ENCODE measurements at regions of chr11 and their contacts with region 1.

Region 1: DNA sequence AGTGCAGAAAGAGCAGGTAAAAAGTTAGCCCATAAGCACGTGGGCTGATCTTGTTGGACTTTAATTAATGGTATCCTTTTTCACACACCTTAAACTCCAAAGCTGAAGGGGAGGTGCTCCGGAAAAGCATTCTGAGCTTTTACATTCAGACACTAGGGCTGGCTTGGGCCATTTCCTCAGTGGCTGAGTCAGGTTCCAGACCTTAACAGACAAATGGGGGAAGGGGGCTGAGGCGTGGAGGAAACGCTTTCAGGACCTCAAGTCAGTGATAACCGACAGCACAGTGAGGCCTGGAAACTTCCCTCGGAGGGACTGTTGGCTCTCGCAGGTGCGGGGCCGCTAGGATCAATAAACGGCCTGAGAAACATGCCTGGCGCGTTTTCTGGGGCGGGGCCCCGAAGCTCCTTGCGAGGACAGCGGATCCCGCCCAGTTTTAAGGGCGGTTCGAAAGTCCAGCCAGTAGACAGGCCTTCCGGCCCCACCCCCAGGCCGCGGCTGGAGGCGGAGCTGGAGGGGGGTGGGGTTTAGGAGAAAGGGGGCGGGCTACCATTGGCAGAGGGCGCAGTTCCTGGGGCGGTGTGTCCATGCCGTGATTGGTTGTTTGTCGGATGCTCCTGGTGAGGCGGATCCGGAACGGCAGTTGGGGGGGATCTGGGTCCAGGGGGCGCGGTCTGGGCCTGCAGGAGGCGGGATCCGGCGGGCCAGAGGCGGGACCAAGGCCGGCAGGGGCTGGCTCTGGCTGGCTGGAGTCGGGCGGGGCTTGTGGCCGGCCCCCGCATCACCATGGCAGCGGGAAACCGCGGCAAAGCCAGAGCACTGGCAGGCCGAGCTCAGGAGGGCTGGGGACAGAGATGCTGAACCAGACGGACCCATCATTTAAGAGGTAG is 8.0 kb downstream of the C11orf52 start:
- DNase-seq: peak; percentile 97 to 99 (median 98)
- ATAC-seq: peak; percentile 96
- H3K4me3 ChIP-seq: peak overlapping the region; percentile 40
- H3K27ac ChIP-seq: peak overlapping the region; percentile 89
- H3K4me1 ChIP-seq: peaks cover 31 to 33% of the 10 kb centered on the region in 2 experiments
- H3K27me3 ChIP-seq: no peaks in the 10 kb centered on the region
- CTCF ChIP-seq: no peak
- EP300 ChIP-seq: no peak; the same call in 1 of the 2 replicates
- POLR2A ChIP-seq: peak; percentile 89
- RAD21 ChIP-seq: peak in 1 of 2 experiments; percentile 16; a peak in 1 of 4 replicates

Region 2: DNA sequence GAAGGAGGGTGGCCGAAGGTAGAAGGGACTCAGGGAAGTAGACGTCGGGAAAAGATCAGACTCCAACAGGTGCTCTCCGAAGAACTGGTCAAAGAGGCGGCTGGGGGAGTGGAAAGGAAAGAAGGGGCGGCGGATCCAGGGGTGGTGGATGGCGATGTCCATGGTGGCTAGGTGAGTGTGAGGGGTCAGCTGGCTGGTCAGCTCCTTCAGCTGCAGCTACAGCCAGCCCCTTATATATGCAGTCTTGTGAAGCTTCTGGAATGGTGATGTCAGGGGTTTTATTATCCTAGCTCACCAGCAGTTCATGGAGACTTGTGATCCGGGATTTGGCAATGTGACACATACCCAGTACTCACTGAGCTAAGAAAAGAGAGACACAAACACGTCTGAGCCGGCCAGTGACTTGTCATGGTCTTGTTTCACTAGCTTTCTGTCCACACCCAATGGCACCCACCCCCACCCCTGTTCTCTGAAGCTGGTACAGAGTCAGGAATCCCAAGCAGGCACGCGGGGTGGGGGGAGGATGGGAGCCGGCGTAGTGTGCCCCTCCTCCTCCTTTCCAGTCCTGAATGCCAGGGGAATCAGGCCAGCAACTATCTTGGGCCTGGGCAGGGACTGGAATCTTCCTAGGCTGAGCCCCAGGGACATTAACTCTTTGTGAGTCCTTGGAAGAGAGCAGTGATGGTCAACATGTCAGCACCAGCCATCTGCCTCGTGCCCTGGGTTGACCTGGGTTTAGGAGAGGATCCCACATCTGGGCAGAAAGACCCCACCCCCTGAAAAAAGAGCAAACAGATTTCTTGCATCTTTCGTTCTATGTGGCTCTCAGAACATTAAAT is 15.0 kb before region 1 on chr11 and contains the start of gene CRYAB:
- CTCF ChIA-PET with region 1: no interaction called
- POLR2A ChIA-PET with region 1: interaction called, 13 read pairs
- in situ Hi-C with region 1: no loop called
- intact Hi-C with region 1: no loop called
- DNase-seq: peak; percentile 33 to 66 (median 36)
- ATAC-seq: peak; percentile 48
- H3K4me3 ChIP-seq: no peak within 1 kb of the TSS
- H3K27ac ChIP-seq: peak within 1 kb of the TSS; percentile 57
- H3K4me1 ChIP-seq: peaks cover 35 to 40% of the 10 kb centered on the region in 2 experiments; a peak in 4 of 5 replicates
- H3K27me3 ChIP-seq: no peaks in the 10 kb centered on the region
- CTCF ChIP-seq: no peak
- EP300 ChIP-seq: no peak
- POLR2A ChIP-seq: no peak
- RAD21 ChIP-seq: no peak
- polyA plus RNA-seq, gene CRYAB: 6.5 to 7.5 TPM

Region 3: GRCh38 chr11:111938687-111939160 is 12.0 kb after region 1 on chr11:
- CTCF ChIA-PET with region 1: no interaction called
- POLR2A ChIA-PET with region 1: interaction called, 20 read pairs
- in situ Hi-C with region 1: no loop called
- intact Hi-C with region 1: no loop called
- DNase-seq: peak in 2 of 4 experiments; percentile 32 to 56
- ATAC-seq: peak; percentile 52
- H3K4me3 ChIP-seq: no peak overlapping the region
- H3K27ac ChIP-seq: peak overlapping the region; percentile 62; the same call in 2 of the 3 replicates
- H3K4me1 ChIP-seq: peaks cover 22 to 31% of the 10 kb centered on the region in 2 experiments
- H3K27me3 ChIP-seq: no peaks in the 10 kb centered on the region
- CTCF ChIP-seq: no peak
- EP300 ChIP-seq: no peak
- POLR2A ChIP-seq: no peak
- RAD21 ChIP-seq: no peak

Region 4: DNA sequence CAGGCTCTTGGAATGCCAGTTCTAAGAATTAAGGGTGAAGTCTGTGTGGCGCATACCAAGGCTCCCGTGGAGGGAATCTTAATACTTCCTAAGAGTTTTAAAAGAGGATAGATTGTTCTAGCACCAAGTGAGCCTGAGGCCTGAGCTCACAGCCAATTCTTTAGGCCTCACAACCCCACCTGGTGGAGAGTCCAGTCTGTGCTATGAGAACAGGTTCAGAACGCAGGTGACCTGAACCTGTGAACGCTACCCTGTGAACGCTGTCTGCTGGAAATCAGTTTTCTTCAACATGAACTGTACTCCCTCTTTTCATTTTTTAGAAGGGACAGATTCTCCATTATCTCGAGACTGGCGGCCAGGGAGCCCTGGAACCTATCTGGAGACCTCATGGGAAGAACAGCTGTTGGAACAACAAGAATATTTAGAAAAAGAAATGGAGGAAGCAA is 55.3 kb after region 1 on chr11:
- CTCF ChIA-PET with region 1: interaction called, 10 read pairs
- POLR2A ChIA-PET with region 1: interaction called, 3 read pairs
- in situ Hi-C with region 1: no loop called
- intact Hi-C with region 1: loop called (anchors 1 kb)
- DNase-seq: peak; percentile 57 to 84 (median 65)
- ATAC-seq: peak; percentile 95
- H3K4me3 ChIP-seq: no peak overlapping the region
- H3K27ac ChIP-seq: peak overlapping the region; percentile 62; the same call in 1 of the 3 replicates
- H3K4me1 ChIP-seq: peaks cover 8 to 28% of the 10 kb centered on the region in 2 experiments
- H3K27me3 ChIP-seq: no peaks in the 10 kb centered on the region
- CTCF ChIP-seq: peak; percentile 83 to 91 (median 85)
- EP300 ChIP-seq: no peak
- POLR2A ChIP-seq: no peak
- RAD21 ChIP-seq: peak; percentile 78 to 86

Region 5: GRCh38 chr11:112024773-112025678 is 98.3 kb after region 1 on chr11 and contains the start of gene DLAT:
- CTCF ChIA-PET with region 1: interaction called, 4 read pairs
- POLR2A ChIA-PET with region 1: no interaction called
- in situ Hi-C with region 1: no loop called
- intact Hi-C with region 1: loop called (anchors 1 kb)
- DNase-seq: peak; percentile 86 to 95 (median 87)
- ATAC-seq: peak; percentile 90
- H3K4me3 ChIP-seq: peak within 1 kb of the TSS; percentile 89
- H3K27ac ChIP-seq: peak within 1 kb of the TSS; percentile 87
- H3K4me1 ChIP-seq: peaks cover 6 to 13% of the 10 kb centered on the region in 2 experiments; a peak in 3 of 5 replicates
- H3K27me3 ChIP-seq: no peaks in the 10 kb centered on the region
- CTCF ChIP-seq: no peak
- EP300 ChIP-seq: no peak; the same call in 1 of the 2 replicates
- POLR2A ChIP-seq: peak; percentile 97
- RAD21 ChIP-seq: 0 out of 4 replicates have a peak, but pooled peaks of 1 of the 2 experiments have one; percentile 13
- polyA plus RNA-seq, gene DLAT: 41.7 to 47.6 TPM